ENCODE measurements at regions of chr22 and their contacts with region 1.

Region 1: DNA sequence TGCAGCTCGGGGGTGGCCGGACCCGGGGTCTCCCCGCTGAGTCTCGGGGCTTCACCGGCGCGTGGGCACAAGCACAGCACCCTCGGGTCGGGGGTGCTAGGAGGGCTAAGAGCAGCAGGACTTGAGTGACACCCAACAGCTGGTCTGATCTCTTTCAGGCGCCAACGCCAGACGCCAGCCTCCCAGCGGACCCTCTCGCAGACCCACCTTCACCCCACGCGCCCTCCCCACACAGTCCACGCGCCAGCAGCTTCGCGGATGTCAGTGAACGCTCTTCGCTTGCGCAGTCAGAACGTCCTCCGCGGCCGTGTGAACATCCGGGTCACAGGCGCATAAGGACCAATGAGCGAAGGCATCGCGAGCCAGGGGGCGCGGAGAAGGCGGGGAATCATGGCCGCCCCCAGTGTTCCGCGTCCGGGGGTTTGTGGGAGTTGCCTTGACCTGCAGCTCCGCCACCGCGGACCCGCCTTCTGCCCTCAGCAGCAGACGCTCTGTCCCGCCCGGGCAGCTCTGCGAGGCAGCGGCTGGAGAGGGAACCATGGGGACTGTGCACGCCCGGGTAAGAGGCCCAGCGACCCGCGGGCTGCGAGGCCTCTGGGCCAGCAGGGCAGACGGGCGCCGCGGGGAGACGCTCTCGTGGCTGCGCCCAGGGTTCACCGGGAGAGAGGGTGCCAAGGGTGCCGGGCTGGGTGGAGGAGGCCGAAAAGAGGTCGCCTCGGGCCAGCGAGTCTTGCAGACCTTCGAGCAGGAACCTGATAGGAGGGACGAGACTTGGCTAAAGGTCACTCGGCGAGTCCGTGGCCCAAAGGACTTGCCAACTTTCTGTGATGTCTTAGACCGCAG is at the start of gene SAMM50:
- DNase-seq: peak; percentile 86
- ATAC-seq: peak; percentile 95
- H3K4me3 Mint-ChIP-seq: peak within 1 kb of the TSS; percentile 96
- H3K27ac Mint-ChIP-seq: peak within 1 kb of the TSS; percentile 94
- H3K4me1 Mint-ChIP-seq: peaks cover 33% of the 10 kb centered on the region
- H3K27me3 Mint-ChIP-seq: peaks cover 3% of the 10 kb centered on the region
- CTCF ChIP-seq: no peak
- total RNA-seq, gene SAMM50: 49.6 and 51.2 TPM in 2 replicates

Region 2: DNA sequence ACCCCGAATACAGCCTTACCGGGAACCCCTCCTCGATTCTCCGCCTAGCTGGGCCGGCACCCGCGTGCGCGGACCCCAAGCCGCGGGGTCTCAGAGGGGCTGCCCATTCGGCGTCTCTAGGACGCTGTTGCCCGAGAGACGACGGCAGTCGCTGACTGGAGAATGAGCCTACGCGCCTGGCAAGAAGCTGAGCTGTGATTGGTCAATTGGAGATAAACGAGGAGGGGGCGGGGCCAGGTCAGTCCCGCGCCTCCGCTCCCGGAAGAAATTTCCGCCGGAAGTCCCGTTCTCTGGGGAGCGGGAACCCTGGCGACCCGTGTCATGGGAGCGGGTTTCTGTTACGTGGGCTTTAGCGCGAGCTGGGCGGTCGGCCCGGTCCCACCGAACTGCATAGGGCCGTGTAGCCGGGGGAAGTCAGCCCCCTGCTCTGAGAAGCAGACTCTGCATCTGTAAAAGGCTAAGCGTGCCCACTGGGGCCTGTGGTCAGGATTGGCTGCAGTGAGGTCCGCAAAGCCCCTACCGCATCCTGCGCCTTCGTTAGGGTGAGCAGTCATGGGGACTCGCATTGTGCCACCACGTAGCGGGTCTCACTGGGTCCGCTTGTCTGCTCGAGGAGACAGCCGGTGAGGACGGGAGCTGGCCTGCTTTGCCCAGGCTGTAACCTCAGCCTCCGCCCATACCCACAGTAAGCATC is 143.0 kb before region 1 on chr22 and contains the start of gene EFCAB6:
- CTCF ChIA-PET with region 1: no interaction called
- POLR2A ChIA-PET with region 1: interaction called, 9 read pairs
- intact Hi-C with region 1: loop called (anchors 5 kb)
- DNase-seq: peak; percentile 80
- ATAC-seq: peak; percentile 94
- H3K4me3 Mint-ChIP-seq: peak within 1 kb of the TSS; percentile 92
- H3K27ac Mint-ChIP-seq: peak within 1 kb of the TSS; percentile 84
- H3K4me1 Mint-ChIP-seq: peaks cover 16% of the 10 kb centered on the region
- H3K27me3 Mint-ChIP-seq: peaks cover 7% of the 10 kb centered on the region
- CTCF ChIP-seq: no peak
- total RNA-seq, gene EFCAB6: 0.46 TPM in 1 of 2 replicates, not detected in the other

Region 3: GRCh38 chr22:43923631-43924464 is 31.4 kb before region 1 on chr22 and contains the start of gene PNPLA3:
- CTCF ChIA-PET with region 1: no interaction called
- POLR2A ChIA-PET with region 1: interaction called, 3 read pairs
- intact Hi-C with region 1: loop called (anchors 1 kb)
- DNase-seq: peak; percentile 60
- ATAC-seq: peak; percentile 85
- H3K4me3 Mint-ChIP-seq: peak within 1 kb of the TSS; percentile 88
- H3K27ac Mint-ChIP-seq: peak within 1 kb of the TSS; percentile 46
- H3K4me1 Mint-ChIP-seq: peaks cover 6% of the 10 kb centered on the region
- H3K27me3 Mint-ChIP-seq: peaks cover 30% of the 10 kb centered on the region
- CTCF ChIP-seq: no peak
- total RNA-seq, gene PNPLA3: 0.33 TPM in 1 of 2 replicates, not detected in the other

Region 4: DNA sequence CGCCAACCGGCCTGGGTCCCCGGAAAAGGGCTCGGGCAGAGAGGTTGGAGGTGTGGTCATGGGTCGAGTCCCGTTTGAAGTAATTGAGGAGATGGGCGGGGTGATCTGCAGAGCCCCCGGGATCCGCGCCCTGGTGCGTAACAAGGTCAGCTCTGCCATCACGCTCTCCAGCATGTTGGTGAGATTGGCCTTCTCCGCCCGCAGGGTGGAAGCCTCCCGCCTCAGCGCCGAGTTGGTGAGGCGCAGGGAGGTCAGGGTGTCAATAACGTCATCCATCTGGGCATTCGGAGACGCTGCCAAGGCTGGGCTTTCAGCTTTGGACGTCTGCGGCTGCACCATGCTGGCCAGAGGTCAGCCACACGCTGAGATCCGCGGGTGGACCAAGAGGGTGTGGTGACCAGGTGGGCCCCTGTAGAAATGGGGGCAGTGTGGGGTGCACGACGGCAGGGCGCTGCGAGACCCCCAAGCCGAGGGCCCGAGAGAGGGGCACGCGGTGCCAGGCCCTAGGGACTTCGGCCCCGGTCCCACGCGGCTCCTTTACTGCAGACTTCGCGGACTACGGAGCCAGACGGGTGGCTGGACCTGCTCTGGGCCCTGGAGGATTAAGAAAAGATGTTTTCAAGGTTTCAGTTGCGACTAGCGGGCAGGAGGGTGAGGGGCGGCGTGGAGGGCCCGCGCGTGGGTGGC is 542.1 kb after region 1 on chr22:
- CTCF ChIA-PET with region 1: no interaction called
- POLR2A ChIA-PET with region 1: no interaction called
- intact Hi-C with region 1: loop called (anchors 1 kb)
- DNase-seq: no peak
- ATAC-seq: no peak
- H3K4me3 Mint-ChIP-seq: peak overlapping the region; percentile 81
- H3K27ac Mint-ChIP-seq: no peak overlapping the region
- H3K4me1 Mint-ChIP-seq: peaks cover 11% of the 10 kb centered on the region
- H3K27me3 Mint-ChIP-seq: peaks cover 11% of the 10 kb centered on the region
- CTCF ChIP-seq: no peak

Measured in activated B cell treated with CpG ODN at 0.5 μM for 24 hours (primary cell).